GM10248 (cell line): ENCODE measurements at regions of chr16 and their contacts with region 1.

Region 1: GRCh38 chr16:46908540-46909372 is 24.6 kb downstream of the GPT2 start:
- DNase-seq: peak; percentile 66
- CTCF ChIP-seq: peak; percentile 63

Region 2: DNA sequence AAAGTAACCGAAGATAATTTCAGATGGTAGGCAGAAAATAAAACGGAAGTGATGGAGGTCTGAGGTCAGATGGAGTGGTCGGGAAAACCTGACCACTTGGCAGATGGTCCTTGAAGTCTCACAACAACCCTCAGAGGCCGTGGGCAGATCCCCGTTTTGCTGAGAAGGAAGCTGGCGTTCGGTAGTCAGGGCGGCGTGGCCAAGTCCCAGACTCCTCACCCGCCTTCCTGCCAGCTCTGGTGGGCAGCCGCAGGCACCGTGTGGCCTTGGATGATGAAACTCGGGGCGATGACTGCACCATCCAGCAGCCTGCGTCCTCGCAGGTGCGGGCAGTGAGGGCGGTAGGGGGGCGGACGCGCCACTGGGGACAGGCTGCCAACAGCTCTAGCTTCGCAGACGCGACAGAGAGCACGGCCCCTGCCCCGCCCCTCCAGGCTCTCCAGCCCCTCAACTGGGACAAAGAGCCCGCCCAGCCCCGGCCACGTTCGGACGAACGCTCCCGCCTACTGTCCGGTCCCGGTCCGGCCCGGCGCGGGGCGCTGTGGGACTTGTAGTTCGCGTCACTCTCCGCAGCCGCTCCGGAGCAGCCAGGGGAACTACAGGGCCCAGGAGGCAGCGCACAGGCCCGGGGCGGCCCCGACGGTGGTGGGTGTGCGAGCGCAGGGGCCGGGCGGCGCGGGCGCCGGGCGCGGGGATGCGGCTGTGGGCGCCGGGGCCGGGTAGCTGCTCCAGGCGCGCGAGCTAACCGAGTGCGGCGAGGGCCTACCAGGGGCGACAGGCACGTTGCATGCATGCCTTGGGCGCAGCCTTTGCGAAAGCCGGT is 24.9 kb before region 1 on chr16 and contains the start of gene GPT2:
- CTCF ChIA-PET with region 1: interaction called, 66 read pairs
- POLR2A ChIA-PET with region 1: interaction called, 5 read pairs
- DNase-seq: peak; percentile 92
- CTCF ChIP-seq: no peak